Activated T-helper 2 cell treated with anti-CD3 and anti-CD28 coated beads, Interferon-gamma antibody, Interleukin-2, Interleukin-4, amounts not matched to agents 10 μg/mL and 5 μg/mL and 100 μg/mL, durations not matched to agents 14 hours and 24 hours and 36 hours (primary cell): ENCODE measurements at regions of chr14 and their contacts with region 1.

Region 1: DNA sequence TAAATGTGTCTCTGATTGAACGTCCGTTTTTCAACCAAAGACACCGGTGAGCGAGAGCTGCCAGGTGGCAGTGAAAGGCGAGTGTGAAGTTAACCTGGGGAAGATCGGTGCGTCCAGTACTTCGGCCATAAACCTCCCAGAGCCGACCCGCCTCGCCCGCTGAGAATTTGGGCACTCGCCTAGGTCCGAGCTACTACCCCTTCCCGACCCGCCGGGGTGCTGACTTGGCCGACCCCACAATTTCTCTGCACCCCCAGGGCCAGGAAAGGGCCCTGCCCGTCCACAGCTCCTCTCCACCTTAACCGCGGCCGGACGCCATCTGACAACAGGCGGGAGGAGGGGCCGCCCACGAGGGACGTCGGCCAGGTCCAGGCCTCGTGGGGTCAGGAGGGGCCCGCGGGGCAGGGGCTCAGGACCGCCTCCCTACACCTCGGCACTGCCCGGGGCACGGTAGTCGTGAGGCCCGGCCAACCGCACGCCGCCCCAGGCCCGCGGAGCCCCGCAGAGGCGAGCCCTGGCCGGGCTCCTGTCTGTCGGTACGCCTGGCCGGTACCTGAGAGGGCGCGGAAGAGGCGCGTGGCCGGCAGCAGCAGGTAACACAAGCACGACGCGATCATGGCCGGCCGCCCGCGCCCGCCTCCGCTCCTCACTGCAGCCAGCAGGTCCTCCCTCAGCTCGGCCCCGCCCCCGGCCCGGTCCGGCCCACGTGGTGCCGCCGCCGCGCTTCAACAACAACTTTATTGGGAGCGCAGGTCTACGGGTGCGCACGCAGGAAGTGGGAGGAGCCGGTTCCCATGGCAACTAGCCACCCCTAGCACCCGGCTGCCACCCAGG is at the start of gene ANGEL1:
- DNase-seq: peak; percentile 97
- H3K4me3 Mint-ChIP-seq: peak within 1 kb of the TSS; percentile 93
- H3K27ac Mint-ChIP-seq: peak within 1 kb of the TSS; percentile 86
- H3K4me1 Mint-ChIP-seq: peaks cover 21% of the 10 kb centered on the region
- H3K27me3 Mint-ChIP-seq: no peaks in the 10 kb centered on the region
- total RNA-seq, gene ANGEL1: 15.0 and 15.9 TPM in 2 replicates

Region 2: GRCh38 chr14:76710056-76711010 is 102.1 kb before region 1 on chr14:
- intact Hi-C with region 1: loop called (anchors 1 kb)
- DNase-seq: no peak
- H3K4me3 Mint-ChIP-seq: no peak overlapping the region
- H3K27ac Mint-ChIP-seq: no peak overlapping the region
- H3K4me1 Mint-ChIP-seq: no peaks in the 10 kb centered on the region
- H3K27me3 Mint-ChIP-seq: peaks cover under 1% of the 10 kb centered on the region

Region 3: DNA sequence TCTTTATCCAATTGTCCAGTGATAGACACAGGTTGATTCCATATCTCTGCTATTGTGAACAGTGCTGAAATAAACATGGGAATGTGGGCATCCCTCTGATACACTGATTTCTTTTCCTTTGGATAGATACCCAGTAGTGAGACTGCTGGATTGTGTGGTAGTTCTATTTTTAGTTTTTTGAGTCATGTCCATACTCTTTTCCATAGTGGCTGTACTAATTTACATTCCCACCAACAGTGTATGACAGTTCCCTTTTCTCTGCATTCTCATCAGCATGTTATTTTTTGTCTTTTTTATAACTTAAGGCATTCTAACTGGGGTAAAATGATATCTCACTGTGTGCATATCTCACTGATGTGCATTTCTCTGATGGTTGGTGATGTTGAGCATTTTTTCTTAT is 75.9 kb before region 1 on chr14:
- intact Hi-C with region 1: no loop called
- DNase-seq: no peak
- H3K4me3 Mint-ChIP-seq: no peak overlapping the region
- H3K27ac Mint-ChIP-seq: no peak overlapping the region
- H3K4me1 Mint-ChIP-seq: no peaks in the 10 kb centered on the region
- H3K27me3 Mint-ChIP-seq: peaks cover 21% of the 10 kb centered on the region

Region 4: GRCh38 chr14:76767681-76768656 is 44.5 kb before region 1 on chr14:
- intact Hi-C with region 1: loop called (anchors 5 kb)
- DNase-seq: peak; percentile 66
- H3K4me3 Mint-ChIP-seq: no peak overlapping the region
- H3K27ac Mint-ChIP-seq: peak overlapping the region; percentile 60
- H3K4me1 Mint-ChIP-seq: peaks cover 21% of the 10 kb centered on the region
- H3K27me3 Mint-ChIP-seq: peaks cover 19% of the 10 kb centered on the region

Region 5: DNA sequence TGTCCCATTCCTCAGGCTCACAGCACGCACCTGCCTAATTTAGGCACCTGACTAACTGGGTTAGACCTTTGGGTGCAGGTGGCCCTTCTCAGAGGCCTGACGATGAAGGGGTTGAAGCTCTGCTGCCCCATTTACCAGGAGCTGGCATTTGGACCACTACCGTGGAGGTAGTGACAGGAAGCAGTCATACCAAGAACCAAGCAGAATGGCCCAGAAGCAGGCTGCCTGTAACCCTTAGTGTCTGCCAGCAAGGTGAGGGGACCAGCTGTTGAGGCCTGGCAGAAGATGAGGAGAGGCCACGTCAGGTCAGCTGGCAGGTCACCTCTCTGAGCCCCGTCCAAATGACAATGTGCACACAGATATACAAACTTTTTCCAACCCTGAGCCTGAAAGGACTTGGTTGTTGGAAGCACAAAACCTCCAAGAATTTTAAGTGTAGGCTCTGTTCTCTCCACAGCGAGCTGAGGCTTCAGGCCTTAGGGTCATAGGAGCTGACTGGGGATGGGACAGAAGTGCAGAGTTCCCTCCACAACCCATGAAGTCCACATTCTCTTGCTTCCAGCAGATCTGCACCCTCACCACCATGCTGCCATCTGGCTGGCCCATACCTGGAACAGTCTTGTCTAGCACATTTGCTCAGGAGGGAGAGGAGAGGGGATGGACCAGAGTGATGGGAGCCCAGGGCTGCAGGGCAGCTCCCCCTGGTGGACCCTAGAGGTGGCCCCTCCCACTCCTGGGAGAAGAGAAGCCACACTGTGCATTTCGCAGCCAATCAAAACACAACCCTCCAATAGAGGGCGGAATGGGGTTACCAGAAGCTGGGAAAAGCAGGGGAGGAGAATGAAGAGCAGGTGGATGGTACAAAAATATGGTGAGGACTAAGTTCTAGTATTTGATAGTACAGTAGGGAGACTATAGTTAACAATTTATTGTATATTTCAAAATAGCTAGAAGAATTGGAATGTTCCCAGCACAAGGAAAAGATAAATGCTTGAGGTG is 27.9 kb before region 1 on chr14:
- intact Hi-C with region 1: loop called (anchors 2 kb)
- DNase-seq: peak; percentile 43
- H3K4me3 Mint-ChIP-seq: no peak overlapping the region
- H3K27ac Mint-ChIP-seq: peak overlapping the region; percentile 3
- H3K4me1 Mint-ChIP-seq: peaks cover 32% of the 10 kb centered on the region
- H3K27me3 Mint-ChIP-seq: no peaks in the 10 kb centered on the region